Tibial artery (tissue), 4 donors: ENCODE measurements at regions of chr2 and their contacts with region 1.

Region 1: GRCh38 chr2:164061129-164061746 is 325.4 kb upstream of the FIGN start:
- DNase-seq: no peak
- H3K4me3 ChIP-seq: no peak overlapping the region
- H3K27ac ChIP-seq: no peak overlapping the region
- H3K4me1 ChIP-seq: peaks cover 0 to 14% (median 2%) of the 10 kb centered on the region in 4 donors
- H3K27me3 ChIP-seq: no peaks in the 10 kb centered on the region
- CTCF ChIP-seq: peak; percentile 50 to 56

Region 2: DNA sequence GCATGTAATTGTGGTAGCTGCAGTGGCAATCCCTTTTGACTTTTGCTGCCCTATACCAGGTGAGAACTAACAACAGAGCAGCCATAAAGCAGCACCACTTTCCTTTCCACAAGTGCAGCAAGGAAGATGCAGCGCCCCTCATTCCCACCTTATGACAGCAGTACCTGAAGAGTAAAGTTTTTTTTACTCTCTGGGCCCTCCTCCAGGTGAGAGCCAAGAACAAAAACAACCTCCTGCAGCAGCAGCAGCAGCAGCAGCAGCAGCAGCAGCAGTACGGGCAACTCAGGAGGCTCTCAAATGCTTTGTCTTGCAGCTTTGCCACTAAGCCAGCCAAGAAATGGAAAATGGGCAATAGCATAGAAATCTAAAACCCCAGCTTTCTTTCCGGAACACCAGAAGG is 723.0 kb before region 1 on chr2:
- intact Hi-C with region 1: loop called (anchors 10 kb)
- DNase-seq: no peak
- H3K4me3 ChIP-seq: no peak overlapping the region
- H3K27ac ChIP-seq: no peak overlapping the region
- H3K4me1 ChIP-seq: no peaks in the 10 kb centered on the region
- H3K27me3 ChIP-seq: no peaks in the 10 kb centered on the region
- CTCF ChIP-seq: no peak

Region 3: DNA sequence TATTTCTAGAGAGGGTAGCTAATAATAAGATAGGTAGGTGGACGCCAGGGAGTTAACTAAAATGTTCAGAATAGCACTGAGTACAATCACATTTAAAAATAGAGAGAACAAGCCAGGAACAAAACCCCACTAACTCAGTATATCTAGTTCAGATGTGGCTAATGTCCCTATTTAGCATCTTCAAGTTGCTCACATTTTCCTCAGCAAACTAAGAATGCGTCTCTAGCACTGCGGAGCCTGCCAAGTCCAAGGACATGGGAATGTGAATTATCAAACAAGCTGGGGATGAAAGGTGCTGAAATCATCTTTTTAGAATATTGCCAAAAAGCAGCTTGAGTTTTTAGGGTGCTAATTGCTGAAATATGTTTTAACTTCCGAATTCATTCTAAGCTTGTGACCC is 73.1 kb after region 1 on chr2:
- intact Hi-C with region 1: no loop called
- DNase-seq: no peak
- H3K4me3 ChIP-seq: no peak overlapping the region
- H3K27ac ChIP-seq: no peak overlapping the region
- H3K4me1 ChIP-seq: no peaks in the 10 kb centered on the region
- H3K27me3 ChIP-seq: no peaks in the 10 kb centered on the region
- CTCF ChIP-seq: no peak